Right ventricle myocardium inferior (tissue), 1 donor: ENCODE measurements at regions of chr16 and their contacts with region 1.

Region 1: DNA sequence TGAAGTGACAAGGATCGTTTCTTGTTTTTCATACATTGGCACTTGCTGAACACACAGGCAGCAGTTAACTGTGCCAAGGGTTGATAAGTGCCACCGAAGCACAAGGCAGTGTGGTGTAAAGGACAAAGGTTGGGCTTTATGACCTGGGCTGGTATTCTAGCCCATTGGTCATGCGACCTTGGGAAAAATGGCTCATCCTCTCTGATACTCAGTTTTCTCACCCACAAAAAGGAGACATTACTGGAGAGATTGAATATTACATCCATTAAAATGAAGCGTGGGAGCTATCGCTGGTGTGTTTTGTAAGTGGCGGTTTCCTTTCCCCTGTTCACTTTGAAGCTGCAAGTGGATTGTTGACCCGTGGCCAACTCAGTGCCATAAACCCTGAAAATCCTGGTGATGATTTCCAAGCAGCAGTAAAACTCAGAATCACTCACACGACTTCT is 216.9 kb downstream of the HAPSTR1 start:
- DNase-seq: no peak
- ATAC-seq: peak; percentile 66

Region 2: GRCh38 chr16:9225611-9226316 is 82.6 kb before region 1 on chr16:
- intact Hi-C with region 1: no loop called
- DNase-seq: no peak
- ATAC-seq: no peak

Region 3: GRCh38 chr16:9441012-9441411 is 132.6 kb after region 1 on chr16:
- intact Hi-C with region 1: loop called (anchors 10 kb)
- DNase-seq: no peak
- ATAC-seq: no peak